ENCODE measurements at regions of chr3 and their contacts with region 1.

Region 1: DNA sequence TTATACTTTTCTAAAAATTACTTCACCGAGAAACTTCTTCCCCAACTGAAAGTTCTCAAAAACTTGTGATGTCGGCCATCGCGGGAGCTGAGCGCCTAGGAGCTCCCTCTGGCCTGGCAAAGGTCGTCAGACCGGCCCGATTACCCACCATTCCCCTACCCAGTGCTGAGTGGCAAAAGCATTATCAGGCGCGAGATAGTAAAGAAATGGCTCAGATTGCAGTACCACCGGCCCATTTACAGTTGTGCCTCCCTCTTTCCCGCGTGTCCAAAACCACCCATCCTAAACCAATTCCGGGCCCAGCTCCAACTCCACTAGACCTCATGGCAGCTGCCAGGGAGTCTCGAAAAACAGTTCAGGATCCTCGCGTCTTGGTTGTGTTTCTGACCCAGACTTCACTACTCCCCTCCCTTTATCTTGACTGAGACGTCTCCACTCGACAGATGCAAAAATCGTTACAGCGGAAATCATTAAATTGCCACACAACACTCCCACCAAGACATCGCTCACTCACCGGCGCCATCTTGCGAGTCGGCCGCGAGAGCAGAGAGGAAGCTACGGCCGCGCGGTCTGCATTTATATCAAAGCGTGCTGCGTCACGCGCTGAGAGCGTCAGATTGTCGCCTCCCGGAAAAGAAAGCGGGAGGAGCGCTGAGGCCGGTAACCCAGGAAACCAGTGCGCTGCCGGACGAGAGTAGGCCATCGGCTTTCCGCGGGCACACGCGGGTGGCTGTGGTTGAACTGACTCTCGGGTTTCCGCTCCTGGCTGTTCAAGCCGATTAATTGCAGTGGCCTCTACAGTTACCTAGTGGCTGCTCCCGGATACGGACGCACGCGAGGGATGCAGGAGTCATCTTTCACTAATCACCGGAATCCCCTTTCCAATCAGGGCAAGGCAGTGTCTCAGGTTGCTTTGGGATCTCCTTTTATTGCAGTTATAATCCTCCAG is at the start of gene RPL22L1:
- DNase-seq: peak; percentile 95
- H3K4me3 ChIP-seq: peak within 1 kb of the TSS; percentile 47 to 60
- H3K27ac ChIP-seq: peak within 1 kb of the TSS; percentile 76 to 82
- H3K4me1 ChIP-seq: no peaks in the 10 kb centered on the region
- H3K27me3 ChIP-seq: no peaks in the 10 kb centered on the region
- CTCF ChIP-seq: no peak
- POLR2A ChIP-seq: peak; percentile 72
- total RNA-seq, gene RPL22L1: 17.8 to 60.8 TPM

Region 2: GRCh38 chr3:170829546-170830272 is 40.2 kb before region 1 on chr3:
- intact Hi-C with region 1: no loop called
- DNase-seq: no peak
- H3K4me3 ChIP-seq: no peak overlapping the region
- H3K27ac ChIP-seq: no peak overlapping the region
- H3K4me1 ChIP-seq: no peaks in the 10 kb centered on the region
- H3K27me3 ChIP-seq: no peaks in the 10 kb centered on the region
- CTCF ChIP-seq: no peak
- POLR2A ChIP-seq: no peak

Region 3: DNA sequence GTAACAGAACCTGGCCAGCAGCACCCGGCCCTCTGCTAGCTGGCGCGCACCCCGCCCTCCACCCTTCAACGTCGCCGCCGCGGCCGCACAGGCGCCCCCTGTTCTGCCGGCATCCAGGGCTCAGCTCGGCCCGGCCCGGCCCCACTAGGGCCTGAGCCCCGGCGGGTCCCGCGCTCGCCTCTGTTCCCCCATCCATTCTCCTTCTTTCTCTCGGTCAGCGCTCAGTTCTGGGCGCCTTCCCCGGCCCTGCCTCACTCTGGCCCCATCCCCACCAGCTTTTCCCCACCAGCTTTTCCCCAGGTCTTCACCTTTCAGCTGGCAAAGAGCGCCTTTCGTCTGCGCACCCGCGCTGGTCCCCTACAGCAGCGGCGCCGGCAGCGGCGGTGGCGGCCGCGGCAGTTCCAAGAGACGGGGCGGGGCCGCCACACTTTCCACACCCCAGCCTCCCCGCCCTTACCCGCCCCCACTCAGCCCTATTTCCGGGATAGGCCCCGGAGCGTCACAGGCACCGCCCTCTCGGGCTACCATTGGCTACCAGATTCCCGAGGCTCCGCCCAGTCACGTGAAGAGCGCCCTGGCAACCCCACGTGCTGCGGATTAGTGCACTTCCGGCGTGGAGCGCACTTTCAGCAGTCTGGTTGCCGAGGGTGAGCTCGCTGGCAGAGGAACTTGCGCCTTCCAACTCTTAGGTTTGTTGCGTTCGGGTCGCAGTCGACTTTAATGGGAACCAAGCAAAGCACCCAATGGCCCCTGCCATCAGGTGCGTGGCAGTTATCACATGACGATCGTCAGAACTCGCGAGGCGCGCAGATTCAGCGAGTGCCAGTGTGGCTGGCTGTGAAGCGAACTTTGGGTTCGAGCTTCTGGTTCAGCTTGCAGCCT is 38.6 kb after region 1 on chr3 and contains the start of gene EIF5A2:
- intact Hi-C with region 1: loop called (anchors 2 kb)
- DNase-seq: peak; percentile 84
- H3K4me3 ChIP-seq: peak within 1 kb of the TSS; percentile 39 to 52
- H3K27ac ChIP-seq: peak within 1 kb of the TSS in 1 of 2 donors; percentile 50
- H3K4me1 ChIP-seq: no peaks in the 10 kb centered on the region
- H3K27me3 ChIP-seq: no peaks in the 10 kb centered on the region
- CTCF ChIP-seq: no peak
- POLR2A ChIP-seq: peak; percentile 50
- total RNA-seq, gene EIF5A2: 1.3 to 3.1 TPM

Region 4: GRCh38 chr3:171113714-171114113 is 243.8 kb after region 1 on chr3:
- intact Hi-C with region 1: no loop called
- DNase-seq: no peak
- H3K4me3 ChIP-seq: no peak overlapping the region
- H3K27ac ChIP-seq: no peak overlapping the region
- H3K4me1 ChIP-seq: no peaks in the 10 kb centered on the region
- H3K27me3 ChIP-seq: no peaks in the 10 kb centered on the region
- CTCF ChIP-seq: no peak
- POLR2A ChIP-seq: no peak